CD14-positive monocyte (primary cell): ENCODE measurements at regions of chr2 and their contacts with region 1.

Region 1: GRCh38 chr2:9984217-9984739 is 32.8 kb downstream of the GRHL1 start:
- DNase-seq: peak; percentile 52 to 74 (median 61)
- H3K4me3 ChIP-seq: no peak overlapping the region
- H3K4me3 Mint-ChIP-seq: peak overlapping the region; percentile 45 to 70
- H3K27ac ChIP-seq: no peak overlapping the region
- H3K27ac Mint-ChIP-seq: peak overlapping the region in 3 of 7 donors; percentile 32 to 73 (median 65)
- H3K4me1 ChIP-seq: peaks cover 3 to 8% of the 10 kb centered on the region in 2 donors
- H3K4me1 Mint-ChIP-seq: peaks cover 7% of the 10 kb centered on the region
- H3K27me3 ChIP-seq: no peaks in the 10 kb centered on the region
- H3K27me3 Mint-ChIP-seq: peaks cover 10 to 17% (median 13%) of the 10 kb centered on the region in 3 donors
- CTCF ChIP-seq: peak; percentile 79

Region 2: GRCh38 chr2:8628230-8629209 is 1355.8 kb before region 1 on chr2:
- intact Hi-C with region 1: loop called in 1 of 2 experiments (anchors 10 kb)
- DNase-seq: no peak
- H3K4me3 ChIP-seq: no peak overlapping the region
- H3K4me3 Mint-ChIP-seq: no peak overlapping the region
- H3K27ac ChIP-seq: no peak overlapping the region
- H3K27ac Mint-ChIP-seq: no peak overlapping the region
- H3K4me1 ChIP-seq: no peaks in the 10 kb centered on the region
- H3K4me1 Mint-ChIP-seq: peaks cover 9% of the 10 kb centered on the region
- H3K27me3 ChIP-seq: no peaks in the 10 kb centered on the region
- H3K27me3 Mint-ChIP-seq: peaks cover 2 to 12% (median 2%) of the 10 kb centered on the region in 3 donors
- CTCF ChIP-seq: no peak

Region 3: DNA sequence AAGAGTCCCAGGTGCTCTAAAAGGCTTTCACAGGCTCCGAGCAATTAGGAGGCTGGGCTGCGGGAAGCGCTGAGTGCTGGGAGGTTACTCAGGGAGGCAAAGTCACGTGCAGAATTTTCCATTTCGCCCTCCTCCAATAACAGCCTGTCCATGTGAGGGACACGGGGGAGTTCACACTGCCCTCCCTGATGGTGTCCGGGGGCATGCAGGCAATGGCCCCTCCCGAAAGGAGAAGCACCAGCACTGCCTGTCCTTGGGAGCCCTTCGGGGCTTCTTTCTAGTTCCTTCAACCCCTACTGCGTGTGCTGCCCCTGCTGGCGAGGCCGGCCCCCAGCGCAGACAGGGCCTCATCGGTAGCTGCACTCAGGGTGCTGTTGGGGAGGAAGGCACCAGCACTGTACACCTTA is 255.3 kb after region 1 on chr2:
- intact Hi-C with region 1: no loop called
- DNase-seq: no peak
- H3K4me3 ChIP-seq: no peak overlapping the region
- H3K4me3 Mint-ChIP-seq: no peak overlapping the region
- H3K27ac ChIP-seq: no peak overlapping the region
- H3K27ac Mint-ChIP-seq: no peak overlapping the region
- H3K4me1 ChIP-seq: peaks cover 6 to 14% of the 10 kb centered on the region in 2 donors
- H3K4me1 Mint-ChIP-seq: peaks cover 9% of the 10 kb centered on the region
- H3K27me3 ChIP-seq: peaks cover 0 to 3% of the 10 kb centered on the region in 2 donors
- H3K27me3 Mint-ChIP-seq: peaks cover 10 to 19% (median 11%) of the 10 kb centered on the region in 3 donors
- CTCF ChIP-seq: no peak

Region 4: GRCh38 chr2:10305715-10306114 is 321.4 kb after region 1 on chr2:
- intact Hi-C with region 1: no loop called
- DNase-seq: no peak
- H3K4me3 ChIP-seq: peak overlapping the region in 1 of 3 experiments; percentile 93
- H3K4me3 Mint-ChIP-seq: peak overlapping the region; percentile 96 to 100
- H3K27ac ChIP-seq: no peak overlapping the region
- H3K27ac Mint-ChIP-seq: peak overlapping the region in 1 of 7 donors; percentile 30
- H3K4me1 ChIP-seq: peaks cover 53 to 70% of the 10 kb centered on the region in 2 donors
- H3K4me1 Mint-ChIP-seq: peaks cover 65% of the 10 kb centered on the region
- H3K27me3 ChIP-seq: no peaks in the 10 kb centered on the region
- H3K27me3 Mint-ChIP-seq: peaks cover 0 to 7% (median 5%) of the 10 kb centered on the region in 3 donors
- CTCF ChIP-seq: no peak

Region 5: GRCh38 chr2:10434886-10435819 is 450.9 kb after region 1 on chr2:
- intact Hi-C with region 1: loop called in 1 of 2 experiments (anchors 10 kb)
- DNase-seq: peak; percentile 68 to 73 (median 69)
- H3K4me3 ChIP-seq: no peak overlapping the region
- H3K4me3 Mint-ChIP-seq: no peak overlapping the region
- H3K27ac ChIP-seq: no peak overlapping the region
- H3K27ac Mint-ChIP-seq: no peak overlapping the region
- H3K4me1 ChIP-seq: peaks cover 12 to 17% of the 10 kb centered on the region in 2 donors
- H3K4me1 Mint-ChIP-seq: peaks cover 15% of the 10 kb centered on the region
- H3K27me3 ChIP-seq: peaks cover 0 to 6% of the 10 kb centered on the region in 2 donors
- H3K27me3 Mint-ChIP-seq: peaks cover 7 to 16% (median 8%) of the 10 kb centered on the region in 3 donors
- CTCF ChIP-seq: peak; percentile 96